ENCODE measurements at regions of chr5 and their contacts with region 1.

Region 1: DNA sequence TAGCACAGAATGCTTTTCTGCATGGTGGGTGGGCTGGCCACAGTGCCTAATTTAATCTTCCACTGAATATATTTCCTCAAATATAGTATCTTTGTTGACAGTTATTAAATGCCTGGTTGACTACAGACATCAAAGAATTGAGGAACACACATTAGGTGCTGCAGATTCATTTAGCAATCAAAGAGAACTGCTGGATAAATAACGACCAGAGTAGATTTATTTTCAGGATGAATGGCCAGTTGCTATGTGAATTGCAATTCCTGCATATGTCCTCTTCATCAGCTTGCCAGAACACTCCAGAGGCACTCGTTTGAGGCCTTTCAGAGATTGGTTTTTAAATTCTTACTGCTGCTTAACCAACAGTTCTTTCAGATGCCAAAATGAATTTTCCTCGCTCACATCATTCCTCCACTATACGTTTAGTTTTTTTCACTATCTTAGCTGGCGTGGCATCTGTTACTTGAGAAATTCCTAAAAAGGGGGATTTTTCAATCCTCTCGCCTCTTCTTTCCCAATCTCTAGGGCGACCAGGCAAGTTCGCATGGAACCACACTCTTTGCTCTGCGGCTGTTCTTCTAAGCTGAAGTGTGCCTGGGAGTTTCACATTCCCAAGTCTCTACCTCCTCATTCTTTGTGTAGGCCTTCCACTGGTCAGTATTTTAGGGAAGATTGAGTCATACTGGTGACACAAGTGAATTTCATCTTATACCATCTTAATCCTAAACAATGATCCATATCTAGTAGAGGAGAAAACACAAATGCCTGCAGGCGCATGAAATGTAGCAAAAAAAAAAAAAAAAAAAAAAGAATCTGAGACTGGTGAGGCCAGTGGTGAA is 237.1 kb upstream of the NMUR2 start:
- DNase-seq: no peak
- H3K4me3 ChIP-seq: no peak overlapping the region
- H3K27ac ChIP-seq: no peak overlapping the region
- H3K4me1 ChIP-seq: peaks cover 0 to 25% of the 10 kb centered on the region in 2 donors
- H3K27me3 ChIP-seq: no peaks in the 10 kb centered on the region
- CTCF ChIP-seq: no peak

Region 2: GRCh38 chr5:152608458-152608857 is 33.7 kb before region 1 on chr5:
- intact Hi-C with region 1: no loop called
- DNase-seq: no peak
- H3K4me3 ChIP-seq: no peak overlapping the region
- H3K27ac ChIP-seq: no peak overlapping the region
- H3K4me1 ChIP-seq: no peaks in the 10 kb centered on the region
- H3K27me3 ChIP-seq: no peaks in the 10 kb centered on the region
- CTCF ChIP-seq: no peak

Region 3: DNA sequence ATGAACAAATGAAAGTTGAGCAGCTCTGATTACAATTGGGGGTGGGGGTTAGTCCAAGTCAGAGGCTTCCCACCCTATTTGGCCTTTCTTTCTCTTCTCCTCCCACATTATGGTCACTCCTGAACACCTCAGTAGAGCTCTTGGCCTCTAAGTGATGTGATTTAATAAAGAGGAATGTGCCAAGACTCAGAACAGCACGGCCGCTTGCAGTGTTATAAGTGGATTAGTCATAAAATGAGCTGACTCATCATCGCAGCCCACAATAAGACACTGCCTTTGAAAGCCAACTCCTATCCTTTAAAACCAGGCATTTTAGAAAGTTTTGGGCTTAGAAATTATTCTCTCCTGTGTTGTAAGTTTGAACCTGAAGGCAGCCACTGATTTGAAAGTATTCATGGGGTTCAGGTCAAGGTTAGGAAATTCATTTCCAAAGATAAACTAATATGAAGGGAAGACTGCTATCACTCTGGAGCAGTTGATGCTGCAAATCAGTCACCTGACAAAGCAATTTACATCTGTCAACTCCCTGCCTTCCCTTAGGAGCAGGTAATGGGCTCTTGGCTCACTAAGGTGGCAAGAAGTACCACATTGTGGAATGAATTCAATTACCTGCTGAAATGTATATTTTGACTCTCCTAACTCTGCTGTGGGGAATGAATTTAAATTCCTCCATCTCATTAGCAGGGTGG is 46.5 kb after region 1 on chr5:
- intact Hi-C with region 1: loop called (anchors 5 kb)
- DNase-seq: peak; percentile 27 to 79
- H3K4me3 ChIP-seq: no peak overlapping the region
- H3K27ac ChIP-seq: peak overlapping the region; percentile 54 to 58
- H3K4me1 ChIP-seq: peaks cover 0 to 5% of the 10 kb centered on the region in 2 donors
- H3K27me3 ChIP-seq: no peaks in the 10 kb centered on the region
- CTCF ChIP-seq: no peak

Measured in ascending aorta (tissue), 2 donors.